Transverse colon (tissue), 4 donors: ENCODE measurements at regions of chr10 and their contacts with region 1.

Region 1: DNA sequence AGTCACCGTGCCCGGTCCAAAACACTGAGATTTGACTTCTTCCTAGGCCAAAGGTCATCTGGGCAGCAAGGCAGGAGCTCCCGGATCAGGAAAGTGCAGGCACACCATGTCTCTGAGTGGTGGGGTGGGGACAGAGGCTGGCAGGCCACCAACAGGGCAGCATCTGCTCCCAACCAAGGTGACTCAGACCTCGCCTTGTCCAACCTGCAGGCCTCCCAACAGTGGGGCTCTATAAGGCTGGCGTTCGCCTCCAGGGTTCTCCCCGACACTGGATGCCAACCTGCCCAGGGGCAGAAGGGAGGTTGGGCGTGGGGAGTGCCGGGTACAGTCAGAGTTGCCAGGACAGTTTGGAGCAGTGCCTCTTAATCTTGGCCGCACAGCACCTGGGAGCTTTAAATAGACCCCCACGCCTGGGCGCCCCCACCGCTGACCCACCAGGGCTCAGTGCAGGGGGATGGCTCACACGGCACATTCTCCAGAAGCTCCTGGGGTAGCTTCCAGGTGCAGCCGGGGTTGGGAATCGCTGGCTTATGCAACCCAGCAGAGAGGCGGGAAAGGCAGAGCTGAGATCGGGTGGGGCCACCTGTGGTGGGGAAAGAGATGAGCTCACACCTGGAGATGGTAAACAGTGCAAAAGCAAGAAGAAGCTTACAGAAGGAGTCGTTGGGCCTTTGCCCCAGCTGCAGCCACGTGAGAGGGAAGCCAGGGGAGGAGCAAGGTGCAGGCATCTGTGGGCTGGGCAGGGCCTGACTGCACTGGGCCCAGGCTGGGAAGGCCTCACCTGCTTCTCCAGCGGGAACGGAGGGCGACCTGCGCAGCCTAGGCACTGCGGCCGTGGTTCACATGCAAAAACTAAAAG is 10.8 kb downstream of the CALML5 start:
- DNase-seq: peak; percentile 91
- H3K4me3 ChIP-seq: peak overlapping the region in 1 of 4 donors; percentile 12
- H3K27ac ChIP-seq: peak overlapping the region; percentile 91 to 95 (median 92)
- H3K4me1 ChIP-seq: peaks cover 0 to 17% (median 8%) of the 10 kb centered on the region in 4 donors
- H3K27me3 ChIP-seq: no peaks in the 10 kb centered on the region
- CTCF ChIP-seq: peak in 2 of 5 experiments; percentile 30 to 31
- EP300 ChIP-seq: peak; percentile 66
- POLR2A ChIP-seq: peak; percentile 82

Region 2: DNA sequence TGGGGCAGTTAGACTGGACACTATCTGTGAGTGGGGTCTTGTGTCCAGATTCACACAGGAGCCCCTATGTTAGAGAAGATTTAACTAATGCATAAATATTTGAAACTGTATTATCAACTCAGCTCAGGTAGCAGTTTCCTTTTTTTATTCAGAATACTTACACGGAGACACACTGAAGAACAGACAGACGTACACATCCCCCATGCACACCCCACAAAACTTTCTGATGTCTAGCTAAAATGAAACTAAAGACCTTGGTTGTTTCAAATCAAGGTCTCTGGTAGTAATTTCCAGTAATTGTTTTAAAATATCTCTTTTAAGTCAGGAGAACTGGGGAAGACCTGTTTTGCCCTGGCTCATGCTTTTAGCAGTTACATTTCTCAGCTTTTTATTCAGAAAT is 1147.2 kb after region 1 on chr10:
- in situ Hi-C with region 1: no loop called
- intact Hi-C with region 1: loop called (anchors 5 kb)
- DNase-seq: no peak
- H3K4me3 ChIP-seq: no peak overlapping the region
- H3K27ac ChIP-seq: no peak overlapping the region
- H3K4me1 ChIP-seq: no peaks in the 10 kb centered on the region
- H3K27me3 ChIP-seq: no peaks in the 10 kb centered on the region
- CTCF ChIP-seq: no peak
- EP300 ChIP-seq: no peak
- POLR2A ChIP-seq: no peak